ENCODE measurements at regions of chr22 and their contacts with region 1.

Region 1: GRCh38 chr22:50260801-50261614 is 475 bp downstream of the MAPK12 start:
- DNase-seq: no peak
- ATAC-seq: peak; percentile 34

Region 2: DNA sequence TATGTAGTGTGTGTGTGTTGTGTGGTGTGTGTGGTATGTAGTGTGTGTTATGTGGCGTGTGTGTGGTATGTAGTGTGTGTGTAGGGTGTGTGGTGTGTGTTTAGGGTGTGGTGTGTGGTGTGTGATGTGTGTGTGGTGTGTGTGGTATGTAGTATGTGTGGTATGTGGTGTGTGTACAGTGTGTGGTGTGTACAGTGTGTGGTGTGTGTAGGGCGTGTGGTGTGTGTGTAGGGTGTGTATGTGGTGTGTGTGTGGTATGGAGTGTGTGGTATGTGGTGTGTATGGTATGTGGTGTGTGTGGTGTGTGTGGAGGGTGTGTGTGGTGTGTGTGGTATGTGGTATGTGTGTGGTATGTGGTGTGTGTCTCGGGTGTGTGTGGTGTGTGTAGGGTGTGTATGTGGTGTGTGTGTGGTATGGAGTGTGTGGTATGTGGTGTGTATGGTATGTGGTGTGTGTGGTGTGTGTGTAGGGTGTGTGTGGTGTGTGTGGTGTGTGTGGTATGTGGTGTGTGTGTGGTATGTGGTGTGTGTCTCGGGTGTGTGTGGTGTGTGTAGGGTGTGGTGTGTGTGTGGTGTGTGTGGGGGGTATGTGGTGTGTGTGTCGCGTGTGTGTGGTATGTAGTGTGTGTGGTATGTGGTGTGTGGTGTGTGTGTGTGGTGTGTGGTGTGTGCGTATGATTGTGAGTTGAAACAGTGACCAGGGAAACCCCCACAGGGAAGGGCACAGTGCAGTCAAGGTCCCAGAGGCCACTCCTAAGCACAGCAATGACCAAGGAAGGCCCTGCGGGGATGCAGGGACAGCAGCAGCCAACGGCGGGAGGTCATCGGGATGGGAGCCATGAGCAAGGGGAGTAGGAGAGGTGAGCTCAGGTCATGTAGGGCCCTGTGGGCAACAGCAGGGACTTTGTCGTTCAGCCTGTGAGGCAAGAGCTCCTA is 79.2 kb after region 1 on chr22:
- intact Hi-C with region 1: loop called (anchors 5 kb)
- DNase-seq: no peak
- ATAC-seq: no peak

Measured in sciatic nerve (tissue), 2 donors.